OCI-LY7 (cell line): ENCODE measurements at regions of chr13 and their contacts with region 1.

Region 1: GRCh38 chr13:77150651-77151050 is 123.7 kb upstream of the FBXL3 start:
- DNase-seq: no peak
- H3K4me3 ChIP-seq: no peak overlapping the region
- H3K27ac ChIP-seq: no peak overlapping the region
- H3K4me1 ChIP-seq: no peaks in the 10 kb centered on the region
- CTCF ChIP-seq: no peak

Region 2: GRCh38 chr13:77094773-77095172 is 55.9 kb before region 1 on chr13:
- CTCF ChIA-PET with region 1: no interaction called
- POLR2A ChIA-PET with region 1: no interaction called
- intact Hi-C with region 1: no loop called
- DNase-seq: no peak
- H3K4me3 ChIP-seq: no peak overlapping the region
- H3K27ac ChIP-seq: no peak overlapping the region
- H3K4me1 ChIP-seq: no peaks in the 10 kb centered on the region
- CTCF ChIP-seq: no peak

Region 3: GRCh38 chr13:77168237-77168636 is 17.6 kb after region 1 on chr13:
- CTCF ChIA-PET with region 1: no interaction called
- POLR2A ChIA-PET with region 1: interaction called, 4 read pairs
- intact Hi-C with region 1: loop called (anchors 2 kb)
- DNase-seq: no peak
- H3K4me3 ChIP-seq: no peak overlapping the region
- H3K27ac ChIP-seq: no peak overlapping the region
- H3K4me1 ChIP-seq: no peaks in the 10 kb centered on the region
- CTCF ChIP-seq: no peak

Region 4: DNA sequence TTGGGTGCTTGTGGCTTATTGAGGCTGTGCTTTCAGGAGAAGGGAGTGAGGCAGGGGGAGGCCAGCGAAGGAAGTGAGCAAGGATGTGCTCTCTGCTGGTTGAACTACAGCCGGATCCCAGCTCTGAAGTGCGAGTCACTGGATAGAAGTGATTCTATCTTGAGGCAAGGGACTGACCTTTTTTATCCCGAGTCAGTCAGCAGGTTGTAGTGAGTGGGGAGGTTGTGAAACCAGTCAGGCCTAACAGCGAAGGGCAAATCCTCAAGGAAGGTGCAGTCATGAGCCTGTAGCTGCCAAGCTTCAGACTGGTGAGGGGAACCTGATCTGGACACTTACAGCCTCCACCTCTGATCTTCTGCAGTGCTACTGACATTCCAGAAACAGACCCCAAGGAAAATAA is 403.4 kb after region 1 on chr13:
- CTCF ChIA-PET with region 1: no interaction called
- POLR2A ChIA-PET with region 1: no interaction called
- intact Hi-C with region 1: no loop called
- DNase-seq: no peak
- H3K4me3 ChIP-seq: no peak overlapping the region
- H3K27ac ChIP-seq: no peak overlapping the region
- H3K4me1 ChIP-seq: no peaks in the 10 kb centered on the region
- CTCF ChIP-seq: no peak